Posterior vena cava (tissue), 2 donors: ENCODE measurements at regions of chr5 and their contacts with region 1.

Region 1: GRCh38 chr5:173204185-173204979 is 30.6 kb downstream of the NKX2-5 start:
- DNase-seq: no peak

Region 2: DNA sequence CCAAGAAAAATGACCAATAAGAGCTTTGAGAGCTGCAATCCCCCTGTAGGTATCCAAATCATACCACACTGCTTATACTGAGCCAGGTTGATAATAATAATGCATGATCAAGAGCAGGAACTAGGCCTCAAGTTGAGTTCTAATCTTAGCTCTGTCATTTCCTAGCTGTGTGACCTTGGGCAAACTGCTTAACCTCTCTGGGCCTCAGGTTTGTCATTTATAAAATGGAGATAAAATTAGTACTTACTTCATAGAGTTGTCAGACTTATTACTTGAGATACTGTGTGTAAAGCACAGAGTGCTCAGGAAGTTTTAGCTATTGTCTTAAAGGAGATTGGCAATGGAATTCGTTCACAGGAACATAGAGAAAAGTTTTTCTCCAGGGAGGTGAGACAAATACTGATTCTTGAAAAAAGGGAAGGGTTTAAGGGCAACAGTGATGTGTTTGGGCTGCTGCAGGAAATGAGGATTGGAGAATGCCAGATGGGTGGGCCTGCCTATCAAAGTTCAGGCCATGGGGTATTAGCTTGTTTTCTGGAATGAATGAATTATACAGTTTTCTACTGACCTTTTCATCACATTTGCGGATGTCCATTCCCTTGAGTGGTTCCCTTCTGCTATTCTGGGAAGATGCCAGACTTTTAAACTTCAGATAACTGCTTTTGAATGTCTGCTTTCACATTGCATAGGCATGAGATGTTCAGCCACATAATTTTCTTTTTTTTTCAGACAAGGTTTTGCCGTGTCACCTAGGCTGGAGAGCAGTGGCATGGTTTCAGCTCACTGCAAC is 231.1 kb before region 1 on chr5:
- intact Hi-C with region 1: loop called in 1 of 2 experiments (anchors 10 kb)
- DNase-seq: no peak

Region 3: DNA sequence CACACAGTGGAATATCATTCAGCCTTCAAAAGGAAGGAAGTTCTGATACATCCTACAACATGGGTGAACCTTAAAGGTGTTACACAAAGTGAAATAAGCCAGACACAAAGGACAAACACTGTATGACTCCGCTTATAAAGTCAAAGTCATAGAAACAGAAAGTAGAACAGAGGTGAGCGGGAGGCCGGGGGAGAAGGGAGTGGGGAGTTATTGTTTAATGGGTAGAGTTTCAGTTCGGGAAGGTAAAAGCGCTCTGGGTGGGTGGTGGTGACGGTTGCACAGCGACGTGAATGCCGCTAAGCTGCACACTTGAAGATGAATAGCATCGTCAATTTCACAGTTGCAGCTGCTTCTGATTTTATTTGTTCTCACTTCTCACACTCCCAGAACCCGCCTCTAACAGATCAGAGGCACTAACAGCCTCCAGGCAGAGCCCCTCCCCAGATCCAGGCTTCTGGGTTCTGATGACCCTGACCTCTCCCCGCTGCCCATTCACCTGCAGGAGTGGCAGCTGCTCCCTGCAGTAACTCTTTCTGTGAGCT is 25.9 kb before region 1 on chr5:
- intact Hi-C with region 1: no loop called
- DNase-seq: peak; percentile 10

Region 4: DNA sequence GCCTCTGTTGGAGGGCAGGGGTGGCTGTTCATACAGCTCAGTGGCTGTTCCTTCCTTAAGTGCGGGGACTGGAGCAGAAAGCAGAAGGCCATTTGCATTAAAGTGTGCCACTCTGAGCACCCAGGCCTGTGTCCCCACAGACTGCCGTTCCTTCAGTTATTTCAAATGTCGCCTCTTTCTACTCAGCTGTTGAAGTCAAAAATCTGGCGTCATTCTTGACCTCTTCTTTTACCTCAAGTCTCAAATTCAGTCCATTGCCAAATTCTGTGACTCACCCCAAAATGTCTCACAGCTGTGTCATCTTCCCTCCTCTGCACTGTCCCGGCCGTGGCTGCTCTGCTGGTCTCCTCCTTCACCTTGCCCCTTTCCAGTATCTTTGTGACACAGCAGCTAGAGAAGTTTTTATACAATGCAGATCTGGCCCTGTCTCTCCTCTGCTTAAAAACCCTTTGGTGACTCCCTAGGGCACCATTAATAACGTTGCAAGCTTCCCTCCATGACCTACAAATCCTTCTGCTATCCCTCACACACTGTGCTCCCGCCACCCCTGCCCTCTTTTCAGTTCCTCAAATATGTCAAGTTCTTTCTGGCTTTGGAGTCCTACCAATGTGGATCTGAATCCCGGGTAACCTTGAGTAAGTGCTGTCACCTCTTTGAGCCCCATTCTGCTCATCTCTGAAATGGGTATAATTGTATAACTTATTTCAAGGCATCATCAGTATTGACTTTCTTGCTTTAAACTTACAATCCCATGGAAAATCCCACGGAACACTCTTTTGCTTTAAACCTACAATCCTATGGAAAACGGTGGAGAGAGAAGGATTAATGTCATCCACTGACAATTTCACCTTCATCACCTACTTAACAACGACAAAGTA is 510.4 kb after region 1 on chr5:
- intact Hi-C with region 1: no loop called
- DNase-seq: peak; percentile 79